Activated B cell treated with CpG ODN at 0.5 μM for 24 hours (primary cell): ENCODE measurements at regions of chr7 and their contacts with region 1.

Region 1: DNA sequence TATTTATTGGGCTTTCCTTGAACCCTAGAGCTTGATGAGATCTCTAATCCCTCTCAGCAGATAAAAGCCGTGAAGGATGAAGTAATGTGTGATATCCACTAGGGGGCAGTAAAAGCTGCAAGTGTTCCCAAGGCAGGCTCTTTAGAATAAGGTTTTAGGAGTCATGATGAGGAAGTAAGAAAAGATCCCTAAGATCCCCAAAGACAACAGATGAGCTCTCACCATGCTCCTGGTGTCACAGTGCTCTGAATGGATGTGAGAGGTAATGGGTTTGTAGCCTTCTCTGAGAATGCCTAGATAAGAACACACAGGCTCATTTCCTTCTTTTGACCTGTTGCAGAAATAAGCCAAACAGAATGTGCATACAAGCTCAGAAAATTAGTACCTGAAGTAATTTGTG is 70.4 kb upstream of the ITPRID1 start:
- DNase-seq: no peak
- ATAC-seq: no peak
- H3K4me3 Mint-ChIP-seq: no peak overlapping the region
- H3K27ac Mint-ChIP-seq: no peak overlapping the region
- H3K4me1 Mint-ChIP-seq: no peaks in the 10 kb centered on the region
- H3K27me3 Mint-ChIP-seq: peaks cover 3% of the 10 kb centered on the region
- CTCF ChIP-seq: no peak

Region 2: GRCh38 chr7:31488562-31489203 is 45.2 kb after region 1 on chr7:
- CTCF ChIA-PET with region 1: no interaction called
- POLR2A ChIA-PET with region 1: no interaction called
- intact Hi-C with region 1: loop called (anchors 2 kb)
- DNase-seq: no peak
- ATAC-seq: no peak
- H3K4me3 Mint-ChIP-seq: no peak overlapping the region
- H3K27ac Mint-ChIP-seq: no peak overlapping the region
- H3K4me1 Mint-ChIP-seq: no peaks in the 10 kb centered on the region
- H3K27me3 Mint-ChIP-seq: no peaks in the 10 kb centered on the region
- CTCF ChIP-seq: no peak

Region 3: GRCh38 chr7:31633894-31634494 is 190.5 kb after region 1 on chr7:
- CTCF ChIA-PET with region 1: no interaction called
- POLR2A ChIA-PET with region 1: no interaction called
- intact Hi-C with region 1: loop called (anchors 1 kb)
- DNase-seq: no peak
- ATAC-seq: no peak
- H3K4me3 Mint-ChIP-seq: no peak overlapping the region
- H3K27ac Mint-ChIP-seq: no peak overlapping the region
- H3K4me1 Mint-ChIP-seq: no peaks in the 10 kb centered on the region
- H3K27me3 Mint-ChIP-seq: peaks cover 4% of the 10 kb centered on the region
- CTCF ChIP-seq: no peak

Region 4: GRCh38 chr7:31663072-31663471 is 219.6 kb after region 1 on chr7:
- CTCF ChIA-PET with region 1: no interaction called
- POLR2A ChIA-PET with region 1: no interaction called
- intact Hi-C with region 1: no loop called
- DNase-seq: no peak
- ATAC-seq: no peak
- H3K4me3 Mint-ChIP-seq: no peak overlapping the region
- H3K27ac Mint-ChIP-seq: no peak overlapping the region
- H3K4me1 Mint-ChIP-seq: no peaks in the 10 kb centered on the region
- H3K27me3 Mint-ChIP-seq: no peaks in the 10 kb centered on the region
- CTCF ChIP-seq: no peak

Region 5: DNA sequence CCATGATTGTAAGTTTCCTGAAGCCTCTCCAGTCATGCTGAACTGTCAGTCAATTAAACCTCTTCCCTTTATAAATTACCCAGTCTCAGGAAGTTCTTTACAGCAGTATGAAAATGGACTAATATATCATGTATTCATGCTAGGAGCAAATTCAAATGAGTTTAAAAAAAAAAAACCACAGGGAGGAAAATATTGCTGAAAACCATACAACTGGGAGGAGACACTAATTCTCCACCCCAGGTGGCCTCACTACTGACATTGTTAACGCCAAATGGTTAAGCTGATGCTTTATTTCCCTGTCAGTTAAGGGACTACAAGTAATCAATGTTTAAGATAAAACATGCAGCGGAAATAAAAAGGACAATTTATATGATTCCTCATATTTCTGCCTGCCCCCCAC is 571.7 kb after region 1 on chr7:
- CTCF ChIA-PET with region 1: no interaction called
- POLR2A ChIA-PET with region 1: no interaction called
- intact Hi-C with region 1: no loop called
- DNase-seq: no peak
- ATAC-seq: no peak
- H3K4me3 Mint-ChIP-seq: no peak overlapping the region
- H3K27ac Mint-ChIP-seq: no peak overlapping the region
- H3K4me1 Mint-ChIP-seq: no peaks in the 10 kb centered on the region
- H3K27me3 Mint-ChIP-seq: no peaks in the 10 kb centered on the region
- CTCF ChIP-seq: no peak